GM12878 (cell line): ENCODE measurements at regions of chrX and their contacts with region 1.

Region 1: DNA sequence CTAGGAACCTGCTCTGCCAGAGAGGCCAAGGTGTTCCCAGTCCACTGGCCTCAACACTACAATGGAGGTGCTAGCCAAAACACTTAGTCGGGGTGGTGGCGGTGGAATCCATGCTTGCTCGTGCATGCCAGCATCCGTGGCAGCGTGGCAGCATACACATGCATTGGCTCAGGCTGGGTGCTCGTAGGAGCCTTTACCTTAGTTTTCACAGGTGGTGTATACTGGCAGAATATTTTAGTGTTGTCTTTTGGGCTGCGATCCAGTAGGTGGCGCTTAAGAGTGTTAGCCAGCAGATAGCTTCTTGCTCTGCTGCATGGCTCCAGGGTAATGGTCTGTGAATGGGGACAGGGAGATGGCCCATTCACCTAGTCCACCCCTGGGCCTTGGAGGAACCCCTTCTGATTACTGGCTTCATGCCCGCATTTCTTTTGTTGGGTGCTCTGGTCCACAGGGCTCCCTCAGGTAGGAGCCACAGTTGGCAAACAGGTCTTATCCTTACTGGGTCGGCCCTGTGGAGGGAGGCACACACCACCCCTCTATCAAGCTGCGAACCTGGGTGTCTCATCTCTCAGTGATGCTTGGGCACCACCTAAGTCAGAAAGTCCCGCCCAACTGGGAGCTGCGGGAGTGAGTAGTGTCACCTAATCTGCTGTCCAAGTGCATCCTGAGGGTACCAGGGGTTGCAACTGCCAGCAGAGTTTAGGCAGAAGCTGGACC is 40.0 kb downstream of the RIPPLY1 start:
- DNase-seq: no peak
- ATAC-seq: peak; percentile 94
- H3K4me3 ChIP-seq: no peak overlapping the region
- H3K27ac ChIP-seq: no peak overlapping the region
- H3K4me1 ChIP-seq: no peaks in the 10 kb centered on the region
- H3K27me3 ChIP-seq: no peaks in the 10 kb centered on the region
- CTCF ChIP-seq: peak; percentile 64 to 74 (median 66)
- EP300 ChIP-seq: no peak
- POLR2A ChIP-seq: no peak
- RAD21 ChIP-seq: no peak

Region 2: GRCh38 chrX:106874075-106874474 is 10.9 kb after region 1 on chrX:
- CTCF ChIA-PET with region 1: interaction called, 15 read pairs
- POLR2A ChIA-PET with region 1: no interaction called
- RAD21 ChIA-PET with region 1: no interaction called
- SMC1A ChIA-PET with region 1: no interaction called
- in situ Hi-C with region 1: no loop called
- intact Hi-C with region 1: no loop called
- DNase-seq: no peak
- ATAC-seq: peak; percentile 62
- H3K4me3 ChIP-seq: no peak overlapping the region
- H3K27ac ChIP-seq: no peak overlapping the region
- H3K4me1 ChIP-seq: no peaks in the 10 kb centered on the region
- H3K27me3 ChIP-seq: no peaks in the 10 kb centered on the region
- CTCF ChIP-seq: peak; percentile 38 to 53 (median 49); a peak in 5 of 6 replicates
- EP300 ChIP-seq: no peak
- POLR2A ChIP-seq: no peak
- RAD21 ChIP-seq: peak; percentile 35; the same call in 1 of the 2 replicates

Region 3: DNA sequence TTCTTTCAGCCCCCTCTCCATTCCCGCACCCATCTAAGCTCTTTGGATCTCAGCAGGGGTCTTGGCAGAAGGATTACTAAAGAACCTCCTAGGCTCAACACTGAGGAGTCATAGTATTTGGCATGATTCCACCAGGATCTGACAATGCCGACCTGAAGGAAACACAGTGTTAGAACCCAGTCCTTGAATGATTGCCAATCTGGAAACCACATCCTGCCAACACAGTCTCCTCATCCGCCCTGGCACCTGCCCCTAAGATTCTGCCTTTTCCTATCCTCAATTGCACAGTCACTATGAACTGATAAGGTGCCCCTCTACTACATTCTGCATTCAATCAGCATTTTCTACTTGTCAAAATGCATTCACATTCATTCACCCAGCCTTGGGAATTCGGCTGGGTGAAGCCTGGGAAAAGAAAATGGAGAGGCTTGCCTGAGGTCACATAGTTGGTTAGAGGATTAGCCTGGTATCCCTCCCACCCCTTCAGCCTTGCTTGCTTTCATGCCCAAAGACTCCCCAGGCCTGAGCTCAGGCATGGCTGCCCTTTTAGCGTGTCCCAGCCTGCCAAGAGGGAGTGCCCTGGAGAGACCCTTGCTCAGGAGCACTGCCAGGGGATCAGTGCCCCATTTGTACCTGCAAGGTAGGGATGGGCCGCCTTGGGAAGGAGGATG is 54.8 kb after region 1 on chrX:
- CTCF ChIA-PET with region 1: no interaction called
- POLR2A ChIA-PET with region 1: no interaction called
- RAD21 ChIA-PET with region 1: no interaction called
- SMC1A ChIA-PET with region 1: no interaction called
- in situ Hi-C with region 1: no loop called
- intact Hi-C with region 1: loop called (anchors 2 kb)
- DNase-seq: no peak
- ATAC-seq: no peak
- H3K4me3 ChIP-seq: no peak overlapping the region
- H3K27ac ChIP-seq: no peak overlapping the region
- H3K4me1 ChIP-seq: no peaks in the 10 kb centered on the region
- H3K27me3 ChIP-seq: 0 out of 4 replicates have a peak, but pooled peaks cover 0 to 3% of the 10 kb centered on the region in 2 experiments
- CTCF ChIP-seq: no peak
- EP300 ChIP-seq: no peak
- POLR2A ChIP-seq: no peak
- RAD21 ChIP-seq: no peak